Activated B cell treated with CpG ODN at 0.5 μM for 24 hours (primary cell): ENCODE measurements at regions of chr20 and their contacts with region 1.

Region 1: DNA sequence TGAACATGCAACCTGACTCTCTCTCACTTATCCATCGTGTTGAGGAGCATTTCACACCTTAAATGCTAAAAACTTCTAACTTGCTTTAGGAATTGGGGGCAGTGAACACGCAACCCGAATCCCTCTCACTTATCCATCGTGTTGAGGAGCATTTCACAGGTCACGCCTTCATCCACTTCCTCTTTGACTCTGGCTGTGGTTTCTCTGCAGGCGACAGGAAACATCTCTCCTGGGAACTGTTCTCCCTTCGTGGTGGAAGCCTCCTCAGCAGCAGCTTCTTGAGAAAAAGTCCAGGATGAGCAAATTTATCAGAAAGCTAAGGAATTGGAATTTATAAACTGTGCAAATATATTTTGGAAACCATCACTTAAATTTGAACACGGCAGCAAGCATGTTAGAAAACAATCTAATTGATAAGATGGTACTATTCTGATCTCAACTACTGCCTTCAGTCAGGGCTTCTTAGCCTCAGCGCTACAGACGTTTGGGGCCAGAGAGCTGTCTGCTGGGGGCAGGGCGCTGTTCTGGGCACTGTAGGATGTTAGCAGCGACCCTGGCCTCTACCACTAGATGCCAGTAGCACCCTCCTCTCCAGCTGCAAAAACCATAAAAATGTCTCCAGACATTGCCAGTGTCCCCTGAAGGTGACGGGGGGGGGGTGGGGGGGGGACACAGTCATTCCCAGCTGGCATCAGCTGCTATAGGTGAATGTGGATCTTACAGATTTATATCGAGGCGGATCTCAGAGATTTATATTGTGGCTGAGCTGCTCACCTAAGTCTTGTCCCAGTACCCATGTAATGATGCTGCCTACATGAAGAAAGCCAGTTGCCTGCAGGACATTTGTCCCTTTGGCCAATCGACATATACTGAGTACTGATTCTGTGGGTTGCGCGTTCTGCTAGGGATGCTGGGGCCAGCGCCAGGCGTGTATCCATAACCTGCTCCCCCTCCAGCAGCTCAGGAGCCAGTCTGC is 26.2 kb downstream of the CTCFL start:
- DNase-seq: no peak
- ATAC-seq: peak; percentile 80
- H3K4me3 Mint-ChIP-seq: no peak overlapping the region
- H3K27ac Mint-ChIP-seq: peak overlapping the region; percentile 36
- H3K4me1 Mint-ChIP-seq: peaks cover 34% of the 10 kb centered on the region
- H3K27me3 Mint-ChIP-seq: no peaks in the 10 kb centered on the region
- CTCF ChIP-seq: no peak

Region 2: DNA sequence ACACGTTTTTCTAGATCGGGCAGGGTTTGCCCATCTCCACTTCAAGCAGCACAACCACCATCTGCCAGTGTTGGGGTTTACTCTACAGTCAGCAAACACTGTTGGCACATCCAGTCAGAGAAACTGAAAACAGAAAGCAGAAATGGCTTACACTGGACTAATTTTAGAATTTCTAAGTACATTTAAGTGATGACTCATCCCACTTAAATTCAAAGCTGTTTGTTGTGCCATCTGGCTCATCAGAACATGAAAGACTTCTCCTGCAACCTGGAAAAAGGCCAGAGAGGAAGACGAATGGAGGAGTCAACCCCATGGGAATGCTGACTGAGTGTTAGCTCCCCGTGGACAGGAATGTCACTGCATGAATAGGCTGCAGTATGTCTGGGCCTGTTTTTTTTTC is 943.8 kb before region 1 on chr20:
- CTCF ChIA-PET with region 1: no interaction called
- POLR2A ChIA-PET with region 1: no interaction called
- intact Hi-C with region 1: loop called (anchors 5 kb)
- DNase-seq: no peak
- ATAC-seq: peak; percentile 40
- H3K4me3 Mint-ChIP-seq: no peak overlapping the region
- H3K27ac Mint-ChIP-seq: no peak overlapping the region
- H3K4me1 Mint-ChIP-seq: peaks cover 8% of the 10 kb centered on the region
- H3K27me3 Mint-ChIP-seq: peaks cover 2% of the 10 kb centered on the region
- CTCF ChIP-seq: no peak

Region 3: GRCh38 chr20:57383447-57384347 is 115.0 kb before region 1 on chr20:
- CTCF ChIA-PET with region 1: interaction called, 24 read pairs
- POLR2A ChIA-PET with region 1: interaction called, 7 read pairs
- intact Hi-C with region 1: loop called (anchors 1 kb)
- DNase-seq: no peak
- ATAC-seq: no peak
- H3K4me3 Mint-ChIP-seq: no peak overlapping the region
- H3K27ac Mint-ChIP-seq: no peak overlapping the region
- H3K4me1 Mint-ChIP-seq: peaks cover 17% of the 10 kb centered on the region
- H3K27me3 Mint-ChIP-seq: no peaks in the 10 kb centered on the region
- CTCF ChIP-seq: no peak

Region 4: GRCh38 chr20:57432874-57433491 is 65.7 kb before region 1 on chr20:
- CTCF ChIA-PET with region 1: interaction called, 5 read pairs
- POLR2A ChIA-PET with region 1: interaction called, 3 read pairs
- intact Hi-C with region 1: loop called (anchors 1 kb)
- DNase-seq: peak; percentile 53
- ATAC-seq: peak; percentile 75
- H3K4me3 Mint-ChIP-seq: peak overlapping the region; percentile 59
- H3K27ac Mint-ChIP-seq: peak overlapping the region; percentile 84
- H3K4me1 Mint-ChIP-seq: peaks cover 79% of the 10 kb centered on the region
- H3K27me3 Mint-ChIP-seq: no peaks in the 10 kb centered on the region
- CTCF ChIP-seq: no peak

Region 5: DNA sequence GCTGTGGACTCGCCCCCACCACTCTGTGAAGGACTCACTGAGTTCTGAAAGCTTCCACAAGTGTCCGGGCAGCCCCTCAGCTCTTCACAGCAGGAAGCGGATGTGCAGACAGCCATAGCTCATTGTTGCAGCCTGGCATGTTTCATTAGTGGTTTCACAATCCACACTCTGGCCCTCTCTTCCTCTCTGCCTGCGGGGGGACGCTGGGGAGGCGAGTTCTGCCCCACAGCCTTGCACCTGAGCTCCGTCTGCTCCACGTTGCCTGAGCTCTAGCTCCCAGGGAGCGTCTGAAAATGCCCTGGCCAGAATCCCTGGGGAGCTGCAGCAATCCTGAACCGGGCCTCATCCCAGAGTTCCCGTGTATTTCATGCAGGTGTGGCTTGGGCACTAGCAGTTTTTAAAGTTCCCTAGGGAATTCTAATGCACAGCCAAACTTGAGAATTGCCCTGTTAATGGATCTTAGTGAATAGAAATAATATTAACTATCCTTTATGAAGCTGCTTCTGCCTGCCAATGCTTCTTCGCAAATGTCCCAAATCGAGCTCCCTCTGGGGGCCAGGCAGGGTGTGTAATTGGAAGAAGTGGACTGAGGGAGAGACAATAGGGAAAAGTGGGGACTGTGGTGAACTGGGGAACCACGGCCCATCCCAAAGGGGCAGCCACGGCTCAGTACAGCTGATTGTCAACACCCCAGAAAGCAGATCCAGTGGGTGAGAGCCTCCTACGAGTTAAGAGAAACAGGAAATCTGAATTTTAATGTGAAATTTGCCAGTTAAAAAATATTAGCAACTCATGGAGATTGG is 25.3 kb before region 1 on chr20:
- CTCF ChIA-PET with region 1: interaction called, 12 read pairs
- POLR2A ChIA-PET with region 1: interaction called, 5 read pairs
- intact Hi-C with region 1: loop called (anchors 2 kb)
- DNase-seq: peak; percentile 24
- ATAC-seq: peak; percentile 66
- H3K4me3 Mint-ChIP-seq: peak overlapping the region; percentile 62
- H3K27ac Mint-ChIP-seq: peak overlapping the region; percentile 63
- H3K4me1 Mint-ChIP-seq: peaks cover 87% of the 10 kb centered on the region
- H3K27me3 Mint-ChIP-seq: peaks cover 5% of the 10 kb centered on the region
- CTCF ChIP-seq: no peak

Region 6: DNA sequence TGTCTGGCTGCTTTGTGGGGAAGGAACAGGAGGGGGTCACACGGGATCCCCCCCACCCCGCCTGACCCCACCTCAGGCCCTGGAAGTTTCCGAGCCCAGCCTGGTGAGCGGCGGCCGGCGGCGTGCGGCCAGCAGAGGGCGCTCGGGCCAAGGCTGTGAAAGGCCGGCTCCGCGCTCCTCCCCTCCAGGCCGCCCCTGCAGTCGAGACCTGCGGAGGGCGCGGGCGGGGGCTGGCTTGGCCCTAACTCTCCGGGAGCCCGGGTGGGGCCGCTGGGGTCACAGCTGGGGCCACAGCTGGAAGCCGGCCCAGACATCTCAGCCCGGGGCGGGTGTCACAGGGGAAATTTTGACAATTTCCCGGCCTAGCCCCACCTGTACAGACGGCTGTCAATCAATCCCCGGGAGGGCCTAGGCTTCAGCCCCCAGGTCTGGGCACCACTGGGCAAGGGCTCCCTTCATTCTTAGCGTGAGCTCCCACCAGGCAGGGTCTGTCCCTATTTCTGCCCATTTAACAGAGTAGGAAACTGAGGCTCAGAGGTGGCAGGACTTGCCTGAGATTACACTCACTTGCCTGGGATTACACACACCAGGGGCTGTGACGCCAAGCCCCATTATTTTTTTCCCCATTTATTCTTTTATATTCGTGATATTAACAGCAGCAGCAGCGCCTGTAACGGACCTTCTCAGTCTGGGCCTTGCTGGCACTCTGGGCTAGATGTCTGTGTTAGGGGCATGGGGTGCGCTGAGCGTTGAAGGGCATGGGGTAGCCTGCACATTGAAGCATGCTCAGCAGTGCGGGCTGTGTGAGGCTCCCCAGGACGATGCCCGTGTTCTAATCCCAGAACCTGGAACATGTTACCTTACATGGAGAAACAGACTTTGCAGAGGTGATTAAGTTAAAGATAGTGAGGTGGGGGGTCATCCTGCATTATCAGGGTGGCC is 98.6 kb after region 1 on chr20:
- CTCF ChIA-PET with region 1: interaction called, 26 read pairs
- POLR2A ChIA-PET with region 1: no interaction called
- intact Hi-C with region 1: loop called (anchors 1 kb)
- DNase-seq: peak; percentile 82
- ATAC-seq: peak; percentile 85
- H3K4me3 Mint-ChIP-seq: peak overlapping the region; percentile 42
- H3K27ac Mint-ChIP-seq: no peak overlapping the region
- H3K4me1 Mint-ChIP-seq: peaks cover 25% of the 10 kb centered on the region
- H3K27me3 Mint-ChIP-seq: peaks cover 18% of the 10 kb centered on the region
- CTCF ChIP-seq: peak; percentile 35

Region 7: GRCh38 chr20:58209652-58210397 is 711.1 kb after region 1 on chr20:
- CTCF ChIA-PET with region 1: interaction called, 10 read pairs
- POLR2A ChIA-PET with region 1: no interaction called
- intact Hi-C with region 1: loop called (anchors 1 kb)
- DNase-seq: peak; percentile 88
- ATAC-seq: peak; percentile 96
- H3K4me3 Mint-ChIP-seq: peak overlapping the region; percentile 30
- H3K27ac Mint-ChIP-seq: no peak overlapping the region
- H3K4me1 Mint-ChIP-seq: peaks cover 4% of the 10 kb centered on the region
- H3K27me3 Mint-ChIP-seq: peaks cover 3% of the 10 kb centered on the region
- CTCF ChIP-seq: peak; percentile 99